Esophagus muscularis mucosa (tissue), 4 donors: ENCODE measurements at regions of chr16 and their contacts with region 1.

Region 1: GRCh38 chr16:54286090-54286993 is at the start of gene IRX3:
- DNase-seq: no peak
- H3K4me3 ChIP-seq: peak within 1 kb of the TSS; percentile 53 to 65 (median 56)
- H3K27ac ChIP-seq: peak within 1 kb of the TSS in 2 of 4 donors; percentile 49 to 52
- H3K4me1 ChIP-seq: peaks cover 31 to 90% (median 82%) of the 10 kb centered on the region in 4 donors
- H3K27me3 ChIP-seq: peaks cover 14 to 100% (median 85%) of the 10 kb centered on the region in 4 donors
- CTCF ChIP-seq: no peak
- EP300 ChIP-seq: no peak
- POLR2A ChIP-seq: no peak
- total RNA-seq, gene IRX3: 0.39 to 1.7 (median 1.1) TPM

Region 2: DNA sequence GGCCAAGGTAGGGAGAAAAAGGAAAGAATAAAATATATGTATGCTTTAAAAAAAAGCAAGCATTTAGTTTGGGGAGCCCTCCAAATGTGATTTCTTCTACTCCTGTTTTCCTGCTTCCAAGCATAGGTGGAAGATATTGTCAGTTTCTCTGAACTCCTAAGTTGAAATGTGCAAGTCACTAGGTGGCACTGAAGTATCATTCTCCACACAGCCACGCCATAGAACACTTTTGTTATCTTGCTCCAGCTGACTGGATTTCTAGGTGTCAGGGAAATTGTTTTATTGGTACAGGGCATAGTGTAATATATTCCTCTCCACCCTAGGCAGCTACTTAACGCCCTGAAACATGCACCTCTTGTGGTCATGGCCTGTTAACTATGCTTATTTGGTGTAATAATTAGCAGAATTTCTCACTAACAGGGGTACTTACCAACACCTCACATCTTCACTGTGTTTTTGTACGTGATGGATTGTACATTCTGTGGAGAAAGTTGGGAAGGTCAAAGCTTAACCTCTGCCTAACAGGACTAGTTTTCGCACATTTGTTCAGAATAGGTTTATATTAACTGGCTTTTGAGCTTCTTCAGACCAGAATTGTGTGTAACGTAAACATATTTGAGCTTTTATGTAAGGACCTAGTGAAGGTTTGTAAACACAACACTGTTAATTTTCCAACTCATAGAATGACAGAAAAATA is 513.0 kb before region 1 on chr16:
- intact Hi-C with region 1: loop called (anchors 10 kb)
- DNase-seq: no peak
- H3K4me3 ChIP-seq: no peak overlapping the region
- H3K27ac ChIP-seq: no peak overlapping the region
- H3K4me1 ChIP-seq: peaks cover 25 to 86% (median 74%) of the 10 kb centered on the region in 4 donors
- H3K27me3 ChIP-seq: no peaks in the 10 kb centered on the region
- CTCF ChIP-seq: peak; percentile 49 to 64 (median 53)
- EP300 ChIP-seq: no peak
- POLR2A ChIP-seq: no peak

Region 3: GRCh38 chr16:54585094-54585997 is 299.0 kb after region 1 on chr16:
- intact Hi-C with region 1: no loop called
- DNase-seq: peak; percentile 78
- H3K4me3 ChIP-seq: no peak overlapping the region
- H3K27ac ChIP-seq: no peak overlapping the region
- H3K4me1 ChIP-seq: no peaks in the 10 kb centered on the region
- H3K27me3 ChIP-seq: peaks cover 0 to 21% (median 0%) of the 10 kb centered on the region in 4 donors
- CTCF ChIP-seq: no peak
- EP300 ChIP-seq: no peak
- POLR2A ChIP-seq: no peak

Region 4: GRCh38 chr16:54929090-54930004 is 643.0 kb after region 1 on chr16:
- intact Hi-C with region 1: loop called (anchors 10 kb)
- DNase-seq: peak; percentile 99
- H3K4me3 ChIP-seq: peak overlapping the region; percentile 60 to 65 (median 61)
- H3K27ac ChIP-seq: peak overlapping the region; percentile 8 to 72 (median 50)
- H3K4me1 ChIP-seq: peaks cover 19 to 60% (median 56%) of the 10 kb centered on the region in 4 donors
- H3K27me3 ChIP-seq: peaks cover 14 to 99% (median 67%) of the 10 kb centered on the region in 4 donors
- CTCF ChIP-seq: no peak
- EP300 ChIP-seq: no peak
- POLR2A ChIP-seq: no peak